ENCODE measurements at regions of chr6 and their contacts with region 1.

Region 1: GRCh38 chr6:167501781-167502385 is 177.0 kb downstream of the TTLL2 start:
- DNase-seq: peak; percentile 73 to 83 (median 79)
- ATAC-seq: peak; percentile 92
- H3K4me3 ChIP-seq: no peak overlapping the region
- H3K27ac ChIP-seq: no peak overlapping the region
- H3K4me1 ChIP-seq: peaks cover 8% of the 10 kb centered on the region
- H3K27me3 ChIP-seq: no peaks in the 10 kb centered on the region
- CTCF ChIP-seq: peak; percentile 51 to 91 (median 84)
- POLR2A ChIP-seq: no peak

Region 2: DNA sequence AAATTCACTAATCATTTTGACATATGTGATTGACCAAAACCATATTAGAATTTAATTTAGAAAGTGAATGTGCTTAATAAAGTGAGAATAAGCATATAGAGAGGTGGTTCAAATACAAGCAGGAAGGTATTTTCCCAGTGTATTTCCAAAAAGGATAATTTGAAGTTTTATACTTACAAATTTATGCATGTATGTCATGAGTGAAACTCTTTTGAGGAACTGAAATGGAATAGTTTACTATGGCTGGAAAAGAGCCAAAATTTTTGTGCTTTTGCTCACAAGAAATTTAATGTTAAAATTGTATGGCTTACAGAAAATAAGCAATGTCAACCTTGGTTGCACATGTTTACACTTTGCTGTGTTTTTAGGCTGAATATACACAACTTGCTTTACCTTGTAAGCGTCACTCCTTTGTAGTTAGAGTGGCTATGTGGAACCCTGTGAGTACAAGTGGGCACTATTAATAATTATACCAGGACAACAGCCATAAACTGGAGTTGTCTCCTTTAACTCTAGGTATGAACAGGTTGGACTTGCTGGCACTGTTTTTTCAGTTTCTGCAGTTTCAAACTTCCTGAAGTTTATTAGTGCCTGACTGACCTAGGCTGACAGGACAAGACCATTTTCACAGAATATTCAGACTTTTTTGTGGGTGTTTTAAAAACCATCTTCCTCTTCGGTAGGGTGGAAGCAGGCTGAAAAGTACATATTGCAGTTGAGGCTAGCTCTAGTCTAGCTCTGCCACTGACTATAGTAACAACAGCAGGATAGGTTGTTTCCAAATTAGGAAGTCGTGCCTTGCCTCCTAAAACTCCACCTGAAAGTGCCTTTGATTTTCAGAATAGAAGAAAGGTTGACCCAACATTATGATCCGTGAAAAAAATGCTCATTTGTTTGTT is 330.9 kb after region 1 on chr6:
- intact Hi-C with region 1: no loop called
- DNase-seq: peak in 2 of 4 donors; percentile 26 to 34
- ATAC-seq: peak; percentile 75
- H3K4me3 ChIP-seq: no peak overlapping the region
- H3K27ac ChIP-seq: peak overlapping the region; percentile 74 to 87 (median 80)
- H3K4me1 ChIP-seq: peaks cover 67% of the 10 kb centered on the region
- H3K27me3 ChIP-seq: no peaks in the 10 kb centered on the region
- CTCF ChIP-seq: no peak
- POLR2A ChIP-seq: peak in 2 of 3 donors; percentile 14 to 17

Region 3: GRCh38 chr6:167898673-167899311 is 396.9 kb after region 1 on chr6:
- intact Hi-C with region 1: loop called (anchors 10 kb)
- DNase-seq: no peak
- ATAC-seq: peak; percentile 38
- H3K4me3 ChIP-seq: no peak overlapping the region
- H3K27ac ChIP-seq: no peak overlapping the region
- H3K4me1 ChIP-seq: no peaks in the 10 kb centered on the region
- H3K27me3 ChIP-seq: no peaks in the 10 kb centered on the region
- CTCF ChIP-seq: peak; percentile 45 to 80 (median 77)
- POLR2A ChIP-seq: no peak

Measured in body of pancreas (tissue), 4 donors.